AG04450 (cell line): ENCODE measurements at regions of chr3 and their contacts with region 1.

Region 1: DNA sequence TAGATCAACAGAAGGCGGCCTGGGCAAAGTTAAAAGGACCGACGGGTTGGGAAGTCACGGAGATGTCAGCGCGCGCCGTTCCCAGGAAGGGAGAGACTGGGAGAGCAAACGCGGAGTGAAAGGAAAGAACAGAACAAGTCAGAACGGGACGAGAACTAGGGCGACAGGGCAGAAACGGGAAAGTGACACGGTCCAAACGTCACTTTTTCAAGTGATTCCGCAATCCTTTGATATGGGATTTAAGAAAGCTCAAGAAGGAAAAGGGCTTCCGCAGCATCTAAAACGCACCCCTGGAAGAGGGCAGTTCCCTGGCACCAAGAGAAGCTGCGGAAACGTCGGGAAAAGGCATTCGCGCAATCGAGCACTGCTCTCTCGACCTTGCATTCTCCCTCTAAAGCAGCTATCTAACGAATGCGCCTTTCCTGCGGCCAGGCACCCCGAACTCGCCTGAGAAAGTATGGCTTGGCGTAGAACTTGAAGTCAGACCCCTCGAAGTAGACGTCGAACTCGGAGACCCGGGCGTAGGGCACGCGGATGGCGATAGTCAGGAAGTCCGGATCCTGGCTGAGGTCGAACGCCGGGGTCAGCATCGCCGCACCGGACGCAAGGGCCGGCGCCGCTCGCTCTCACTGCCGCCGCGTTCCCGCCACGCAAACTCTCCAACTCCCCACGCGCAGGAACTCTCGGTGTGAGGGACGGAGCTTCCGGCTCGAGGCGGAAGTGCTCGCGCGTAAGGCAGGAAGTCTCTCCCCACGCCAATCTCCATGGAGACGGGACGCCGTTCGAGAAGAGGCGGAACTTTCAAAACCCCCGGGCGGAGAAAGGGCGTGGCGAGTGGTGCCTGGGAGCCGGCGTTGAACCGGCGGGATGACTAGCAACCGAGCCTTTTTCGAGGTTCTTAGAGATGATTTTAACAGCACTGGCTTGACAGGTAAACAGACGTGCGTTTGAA is at the start of gene SHQ1:
- DNase-seq: peak; percentile 76
- H3K4me3 ChIP-seq: peak within 1 kb of the TSS; percentile 98
- H3K27ac ChIP-seq: peak within 1 kb of the TSS; percentile 68
- H3K27me3 ChIP-seq: no peaks in the 10 kb centered on the region
- CTCF ChIP-seq: no peak
- polyA plus RNA-seq, gene SHQ1: 14.1 and 16.6 TPM in 2 replicates

Region 2: GRCh38 chr3:72473156-72473555 is 374.9 kb before region 1 on chr3:
- CTCF ChIA-PET with region 1: no interaction called
- POLR2A ChIA-PET with region 1: no interaction called
- DNase-seq: no peak
- H3K4me3 ChIP-seq: no peak overlapping the region
- H3K27ac ChIP-seq: no peak overlapping the region
- H3K27me3 ChIP-seq: peaks cover 17% of the 10 kb centered on the region
- CTCF ChIP-seq: no peak

Region 3: GRCh38 chr3:72791161-72791560 is 56.9 kb before region 1 on chr3:
- CTCF ChIA-PET with region 1: no interaction called
- POLR2A ChIA-PET with region 1: no interaction called
- DNase-seq: no peak
- H3K4me3 ChIP-seq: no peak overlapping the region
- H3K27ac ChIP-seq: no peak overlapping the region
- H3K27me3 ChIP-seq: no peaks in the 10 kb centered on the region
- CTCF ChIP-seq: no peak

Region 4: DNA sequence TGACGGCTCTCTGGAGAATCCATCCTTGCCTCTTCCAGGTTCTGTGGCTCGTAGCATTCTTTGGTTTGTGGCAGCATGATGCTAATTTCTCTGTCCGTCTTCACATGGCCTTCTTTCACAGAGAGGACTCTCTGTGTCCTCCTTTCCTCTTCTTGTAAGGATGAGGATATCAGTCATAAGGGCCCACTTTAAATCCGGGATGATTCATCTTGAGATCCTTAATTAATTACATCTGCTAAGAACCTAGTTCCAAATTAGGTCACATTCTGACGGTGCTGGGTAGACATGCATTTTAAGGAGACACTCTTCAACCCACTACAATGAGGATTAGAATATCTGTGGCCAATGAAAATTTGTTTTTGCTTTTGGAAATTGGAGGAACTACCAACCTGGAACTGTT is 24.2 kb after region 1 on chr3:
- CTCF ChIA-PET with region 1: interaction called, 11 read pairs
- POLR2A ChIA-PET with region 1: no interaction called
- DNase-seq: no peak
- H3K4me3 ChIP-seq: no peak overlapping the region
- H3K27ac ChIP-seq: no peak overlapping the region
- H3K27me3 ChIP-seq: peaks cover 5% of the 10 kb centered on the region
- CTCF ChIP-seq: no peak

Region 5: GRCh38 chr3:72896996-72897757 is 49.1 kb after region 1 on chr3:
- CTCF ChIA-PET with region 1: interaction called, 11 read pairs
- POLR2A ChIA-PET with region 1: no interaction called
- DNase-seq: no peak
- H3K4me3 ChIP-seq: no peak overlapping the region
- H3K27ac ChIP-seq: peak overlapping the region; percentile 55
- H3K27me3 ChIP-seq: no peaks in the 10 kb centered on the region
- CTCF ChIP-seq: no peak

Region 6: GRCh38 chr3:72996473-72997333 is 148.7 kb after region 1 on chr3 and contains the start of gene PPP4R2:
- CTCF ChIA-PET with region 1: interaction called, 26 read pairs
- POLR2A ChIA-PET with region 1: interaction called, 6 read pairs
- DNase-seq: peak; percentile 64
- H3K4me3 ChIP-seq: peak within 1 kb of the TSS; percentile 71
- H3K27ac ChIP-seq: peak within 1 kb of the TSS; percentile 94
- H3K27me3 ChIP-seq: no peaks in the 10 kb centered on the region
- CTCF ChIP-seq: no peak
- polyA plus RNA-seq, gene PPP4R2: 35.1 and 48.7 TPM in 2 replicates

Region 7: GRCh38 chr3:73086071-73086494 is 238.1 kb after region 1 on chr3:
- CTCF ChIA-PET with region 1: interaction called, 165 read pairs
- POLR2A ChIA-PET with region 1: no interaction called
- DNase-seq: peak; percentile 15
- H3K4me3 ChIP-seq: peak overlapping the region; percentile 23; the same call in 1 of the 2 replicates
- H3K27ac ChIP-seq: no peak overlapping the region
- H3K27me3 ChIP-seq: peaks cover 2% of the 10 kb centered on the region
- CTCF ChIP-seq: peak; percentile 73